Activated T-helper 2 cell treated with anti-CD3 and anti-CD28 coated beads, Interferon-gamma antibody, Interleukin-2, Interleukin-4, amounts not matched to agents 10 μg/mL and 5 μg/mL and 100 μg/mL, durations not matched to agents 14 hours and 24 hours and 36 hours (primary cell): ENCODE measurements at regions of chr14 and their contacts with region 1.

Region 1: GRCh38 chr14:65095619-65096205 is 6.6 kb downstream of the MAX start:
- DNase-seq: no peak
- H3K4me3 Mint-ChIP-seq: peak overlapping the region; percentile 11
- H3K27ac Mint-ChIP-seq: peak overlapping the region; percentile 6
- H3K4me1 Mint-ChIP-seq: peaks cover 55% of the 10 kb centered on the region
- H3K27me3 Mint-ChIP-seq: no peaks in the 10 kb centered on the region

Region 2: DNA sequence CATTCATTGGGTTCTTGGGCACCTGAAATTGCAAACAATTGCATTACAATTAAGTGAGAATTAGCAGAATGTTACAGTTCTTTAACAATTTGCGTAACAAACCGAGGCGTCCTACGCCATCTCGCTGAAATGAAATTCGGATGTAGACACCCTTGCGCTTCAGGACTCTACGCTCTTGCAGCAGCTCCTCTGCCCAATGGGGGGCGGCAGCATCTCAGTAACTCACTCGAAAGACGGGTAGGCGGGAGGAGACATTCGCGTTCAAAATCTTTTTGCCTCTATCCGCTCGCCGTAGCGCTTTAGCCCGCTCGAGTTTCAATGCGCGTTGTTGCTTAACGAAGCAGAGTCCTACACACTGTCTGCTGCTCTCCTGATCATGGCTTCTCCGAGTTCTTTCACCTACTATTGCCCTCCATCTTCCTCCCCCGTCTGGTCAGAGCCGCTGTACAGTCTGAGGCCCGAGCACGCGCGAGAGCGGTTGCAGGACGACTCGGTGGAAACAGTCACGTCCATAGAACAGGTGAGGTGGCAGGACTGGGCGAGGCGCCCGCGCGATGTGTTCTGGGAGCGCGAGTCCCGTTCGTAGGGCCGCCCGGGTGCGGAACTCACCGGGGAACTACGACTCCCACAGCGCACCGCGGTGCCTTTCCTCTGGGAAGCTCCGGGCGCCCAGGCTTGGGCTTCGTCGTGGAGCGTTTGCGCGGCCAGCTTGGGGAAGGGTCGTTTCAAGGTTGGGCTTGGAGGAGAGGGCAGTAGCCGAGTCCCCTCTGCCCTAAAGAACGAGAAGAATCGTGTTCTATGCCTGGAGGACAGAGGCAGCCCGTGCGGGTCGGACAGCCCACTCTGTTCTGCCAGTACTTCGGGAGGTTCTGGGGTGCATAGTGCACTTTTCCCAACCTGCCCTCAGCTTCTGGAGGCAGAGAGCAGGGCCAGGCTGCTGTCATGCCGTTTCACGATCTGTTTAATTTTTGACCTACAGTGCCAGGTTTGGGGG is 108.8 kb before region 1 on chr14 and contains the start of gene FNTB:
- intact Hi-C with region 1: no loop called
- DNase-seq: peak; percentile 90
- H3K4me3 Mint-ChIP-seq: peak within 1 kb of the TSS; percentile 93
- H3K27ac Mint-ChIP-seq: peak within 1 kb of the TSS; percentile 96
- H3K4me1 Mint-ChIP-seq: peaks cover 43% of the 10 kb centered on the region
- H3K27me3 Mint-ChIP-seq: peaks cover 20% of the 10 kb centered on the region
- total RNA-seq, gene FNTB: 14.8 and 17.5 TPM in 2 replicates

Region 3: GRCh38 chr14:65003394-65003793 is 92.3 kb before region 1 on chr14:
- intact Hi-C with region 1: loop called (anchors 1 kb)
- DNase-seq: no peak
- H3K4me3 Mint-ChIP-seq: no peak overlapping the region
- H3K27ac Mint-ChIP-seq: peak overlapping the region; percentile 68
- H3K4me1 Mint-ChIP-seq: peaks cover 33% of the 10 kb centered on the region
- H3K27me3 Mint-ChIP-seq: no peaks in the 10 kb centered on the region

Region 4: GRCh38 chr14:65054471-65055085 is 41.1 kb before region 1 on chr14:
- intact Hi-C with region 1: no loop called
- DNase-seq: no peak
- H3K4me3 Mint-ChIP-seq: no peak overlapping the region
- H3K27ac Mint-ChIP-seq: no peak overlapping the region
- H3K4me1 Mint-ChIP-seq: peaks cover 4% of the 10 kb centered on the region
- H3K27me3 Mint-ChIP-seq: no peaks in the 10 kb centered on the region